HEK293 (cell line): ENCODE measurements at regions of chr11 and their contacts with region 1.

Region 1: DNA sequence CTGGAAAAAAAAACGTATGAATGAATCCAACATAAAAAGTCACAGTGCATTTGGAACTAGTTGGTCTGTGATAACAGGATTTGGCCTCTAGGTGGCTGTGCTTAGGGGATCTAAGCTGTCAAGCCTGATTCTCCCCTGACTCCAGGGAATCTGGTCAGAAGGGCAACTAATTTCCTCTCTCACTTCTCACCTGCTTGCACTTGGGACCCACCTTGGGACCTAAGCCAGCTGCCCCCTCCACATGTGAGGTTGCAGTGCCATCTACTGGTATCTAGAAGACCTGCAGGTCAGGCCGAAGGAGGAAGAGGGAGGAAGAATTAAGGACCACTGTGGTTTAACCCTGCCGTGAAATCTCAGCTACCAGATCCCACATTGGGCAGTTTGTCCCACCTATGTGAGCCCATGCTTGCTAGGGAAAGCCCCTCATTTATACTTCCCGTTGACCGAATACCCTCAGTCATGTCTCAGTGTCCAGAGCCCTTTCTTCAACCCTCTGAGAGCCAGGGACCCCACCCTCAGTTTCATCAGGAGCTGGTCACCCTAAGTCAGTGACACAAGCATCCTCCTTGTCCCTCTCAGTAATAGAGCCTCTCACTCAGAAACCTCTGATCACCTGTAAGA is 33.2 kb upstream of the CAVIN3 start:
- H3K4me3 ChIP-seq: no peak overlapping the region
- H3K27ac ChIP-seq: no peak overlapping the region
- H3K4me1 ChIP-seq: no peaks in the 10 kb centered on the region
- CTCF ChIP-seq: peak; percentile 86

Region 2: DNA sequence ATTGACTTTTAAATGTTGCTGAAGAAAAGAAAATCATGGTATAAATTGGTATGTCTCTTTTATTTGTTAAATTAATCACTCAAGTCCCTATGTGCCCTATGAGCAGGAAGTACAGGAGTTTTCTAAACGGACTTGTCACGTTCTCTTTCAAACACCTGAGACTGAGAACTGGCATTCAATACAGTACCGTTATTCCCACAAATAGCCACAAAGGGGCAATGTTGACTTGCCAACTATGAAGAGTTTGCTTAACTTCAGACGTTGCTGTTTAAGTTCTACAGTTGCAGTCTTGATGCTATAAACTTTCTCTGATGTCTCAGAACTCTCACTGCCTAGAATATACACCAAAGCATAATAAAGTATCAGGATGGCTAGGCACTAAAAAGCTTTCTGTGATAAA is 330.5 kb before region 1 on chr11:
- CTCF ChIA-PET with region 1: interaction called, 69 read pairs
- POLR2A ChIA-PET with region 1: no interaction called
- H3K4me3 ChIP-seq: no peak overlapping the region
- H3K27ac ChIP-seq: no peak overlapping the region
- H3K4me1 ChIP-seq: no peaks in the 10 kb centered on the region
- CTCF ChIP-seq: no peak

Region 3: GRCh38 chr11:6260207-6260726 is 93.2 kb before region 1 on chr11:
- CTCF ChIA-PET with region 1: interaction called, 12 read pairs
- POLR2A ChIA-PET with region 1: interaction called, 3 read pairs
- H3K4me3 ChIP-seq: peak overlapping the region; percentile 59
- H3K27ac ChIP-seq: no peak overlapping the region
- H3K4me1 ChIP-seq: no peaks in the 10 kb centered on the region
- CTCF ChIP-seq: no peak

Region 4: DNA sequence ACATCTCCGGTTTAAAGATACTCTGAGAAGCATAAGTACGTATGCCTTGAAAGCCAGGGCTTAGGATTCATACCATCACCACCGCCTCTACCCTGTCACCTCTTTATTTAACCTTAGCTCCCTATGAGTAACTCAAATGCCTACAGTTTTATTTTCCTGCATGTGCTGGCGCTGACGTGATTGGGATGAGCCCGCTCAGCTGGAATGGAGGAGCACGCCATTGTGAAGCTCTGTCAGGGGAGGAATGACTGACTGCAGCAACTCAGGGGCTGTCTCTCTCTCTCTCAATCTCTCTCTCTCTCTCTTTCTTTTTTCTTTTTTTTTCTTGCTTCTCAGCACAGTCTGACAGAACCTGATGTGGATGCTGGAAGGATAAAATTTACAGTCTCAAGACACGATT is 45.6 kb before region 1 on chr11:
- CTCF ChIA-PET with region 1: interaction called, 17 read pairs
- POLR2A ChIA-PET with region 1: no interaction called
- H3K4me3 ChIP-seq: no peak overlapping the region
- H3K27ac ChIP-seq: no peak overlapping the region
- H3K4me1 ChIP-seq: no peaks in the 10 kb centered on the region
- CTCF ChIP-seq: no peak

Region 5: GRCh38 chr11:6333112-6333511 is 20.4 kb before region 1 on chr11:
- CTCF ChIA-PET with region 1: interaction called, 17 read pairs
- POLR2A ChIA-PET with region 1: interaction called, 4 read pairs
- H3K4me3 ChIP-seq: no peak overlapping the region
- H3K27ac ChIP-seq: no peak overlapping the region
- H3K4me1 ChIP-seq: no peaks in the 10 kb centered on the region
- CTCF ChIP-seq: no peak

Region 6: DNA sequence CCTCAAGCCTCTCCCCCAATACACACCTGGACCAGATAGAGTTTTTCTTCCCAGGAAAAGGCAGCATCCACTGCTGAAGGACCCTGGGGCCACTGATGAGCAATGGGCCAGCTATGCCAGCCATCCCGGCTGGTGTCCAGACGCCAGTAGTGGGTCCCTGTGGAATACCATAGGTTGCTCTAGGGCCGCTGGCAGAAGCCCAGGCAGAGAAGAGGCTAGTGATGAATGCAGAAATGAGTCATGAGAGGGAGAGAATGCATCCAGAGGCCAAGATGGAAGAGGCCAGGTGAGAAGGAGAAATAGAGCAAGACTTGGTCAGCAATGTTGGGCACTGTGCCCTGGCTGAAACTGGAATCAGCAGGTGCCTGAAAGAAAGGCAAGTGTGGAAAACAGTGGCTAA is 78.4 kb after region 1 on chr11:
- CTCF ChIA-PET with region 1: no interaction called
- POLR2A ChIA-PET with region 1: no interaction called
- H3K4me3 ChIP-seq: no peak overlapping the region
- H3K27ac ChIP-seq: no peak overlapping the region
- H3K4me1 ChIP-seq: no peaks in the 10 kb centered on the region
- CTCF ChIP-seq: no peak